Mammary epithelial cell (primary cell): ENCODE measurements at regions of chr1 and their contacts with region 1.

Region 1: GRCh38 chr1:40951943-40952743 is 27.4 kb upstream of the CTPS1 start:
- DNase-seq: peak; percentile 58
- H3K4me3 ChIP-seq: no peak overlapping the region
- H3K27ac ChIP-seq: no peak overlapping the region
- H3K4me1 ChIP-seq: peaks cover 13% of the 10 kb centered on the region
- H3K27me3 ChIP-seq: no peaks in the 10 kb centered on the region
- CTCF ChIP-seq: peak; percentile 92 to 97

Region 2: DNA sequence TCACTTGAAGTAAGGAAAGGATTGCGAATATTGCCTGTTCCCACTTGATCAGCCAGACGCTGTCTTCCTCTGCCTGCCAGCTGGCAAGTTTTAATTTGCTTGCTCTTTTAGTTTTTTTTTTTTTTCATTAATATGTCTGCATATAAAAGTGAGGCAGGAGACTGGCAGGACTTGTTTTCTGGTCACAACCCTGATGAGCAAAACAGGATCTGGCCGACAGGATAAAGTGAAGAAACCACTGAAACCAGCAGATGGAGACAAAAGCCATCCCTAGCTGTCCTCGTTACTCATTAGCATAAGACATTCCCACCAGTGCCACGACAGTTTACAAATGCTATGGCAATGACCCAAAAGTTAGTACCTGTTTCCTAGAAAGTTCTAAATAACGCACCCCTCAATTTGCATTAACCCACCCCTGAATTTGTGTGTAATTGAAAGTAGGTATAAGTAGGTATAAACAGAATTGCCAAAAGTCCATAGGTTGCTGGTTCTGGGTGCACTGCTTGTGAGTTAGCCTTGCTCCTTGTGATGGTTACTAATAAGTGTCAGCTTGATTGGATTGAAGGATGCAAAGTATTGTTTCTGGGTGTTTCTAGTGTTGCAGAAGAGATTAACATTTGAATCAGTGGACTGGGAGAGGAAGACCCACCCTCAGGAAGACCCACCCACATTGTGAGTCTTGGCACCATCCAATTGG is 359.9 kb before region 1 on chr1:
- CTCF ChIA-PET with region 1: no interaction called
- dilution Hi-C with region 1: no loop called
- in situ Hi-C with region 1: no loop called
- intact Hi-C with region 1: loop called (anchors 1 kb)
- DNase-seq: peak; percentile 75
- H3K4me3 ChIP-seq: no peak overlapping the region
- H3K27ac ChIP-seq: no peak overlapping the region
- H3K4me1 ChIP-seq: peaks cover 17% of the 10 kb centered on the region
- H3K27me3 ChIP-seq: no peaks in the 10 kb centered on the region
- CTCF ChIP-seq: peak; percentile 76

Region 3: DNA sequence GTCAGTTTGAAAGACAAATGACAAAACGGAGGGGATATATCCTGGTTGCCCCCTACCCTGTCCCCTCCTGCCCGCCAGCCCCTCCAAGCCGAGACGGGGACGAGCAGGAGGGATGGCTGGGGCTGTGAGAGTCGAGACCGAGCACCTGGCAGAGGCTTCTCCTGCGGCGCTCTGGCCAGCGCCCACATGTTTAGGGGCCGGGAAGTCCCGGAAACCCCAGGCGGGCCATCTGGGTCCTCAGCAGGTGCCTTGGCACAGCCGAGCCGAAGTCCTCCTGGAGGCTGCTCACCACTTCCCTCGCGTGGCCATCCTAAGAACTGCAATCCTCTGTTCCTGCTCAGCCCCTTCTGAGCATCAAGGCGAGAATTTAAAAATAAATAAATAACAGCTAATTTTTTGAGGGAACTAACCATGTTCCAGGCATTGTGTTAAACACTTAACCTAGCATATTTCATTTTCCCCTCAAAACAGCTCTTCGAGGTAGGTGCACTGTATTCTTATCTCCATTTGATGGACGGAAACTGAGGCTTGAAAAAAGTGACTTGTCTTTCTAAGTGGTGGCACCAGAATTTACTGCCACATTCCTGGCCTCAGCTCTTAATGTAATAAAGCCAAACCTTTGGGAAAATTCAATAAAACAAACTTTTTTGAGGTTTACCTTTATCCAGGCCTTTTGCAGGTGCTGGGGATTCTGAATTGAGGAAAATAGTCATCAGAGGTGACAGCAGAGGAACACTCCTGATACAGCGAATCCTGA is 283.2 kb before region 1 on chr1:
- CTCF ChIA-PET with region 1: no interaction called
- dilution Hi-C with region 1: no loop called
- in situ Hi-C with region 1: no loop called
- intact Hi-C with region 1: loop called (anchors 2 kb)
- DNase-seq: peak; percentile 57
- H3K4me3 ChIP-seq: no peak overlapping the region
- H3K27ac ChIP-seq: no peak overlapping the region
- H3K4me1 ChIP-seq: peaks cover 7% of the 10 kb centered on the region
- H3K27me3 ChIP-seq: no peaks in the 10 kb centered on the region
- CTCF ChIP-seq: peak; percentile 94 to 95

Region 4: DNA sequence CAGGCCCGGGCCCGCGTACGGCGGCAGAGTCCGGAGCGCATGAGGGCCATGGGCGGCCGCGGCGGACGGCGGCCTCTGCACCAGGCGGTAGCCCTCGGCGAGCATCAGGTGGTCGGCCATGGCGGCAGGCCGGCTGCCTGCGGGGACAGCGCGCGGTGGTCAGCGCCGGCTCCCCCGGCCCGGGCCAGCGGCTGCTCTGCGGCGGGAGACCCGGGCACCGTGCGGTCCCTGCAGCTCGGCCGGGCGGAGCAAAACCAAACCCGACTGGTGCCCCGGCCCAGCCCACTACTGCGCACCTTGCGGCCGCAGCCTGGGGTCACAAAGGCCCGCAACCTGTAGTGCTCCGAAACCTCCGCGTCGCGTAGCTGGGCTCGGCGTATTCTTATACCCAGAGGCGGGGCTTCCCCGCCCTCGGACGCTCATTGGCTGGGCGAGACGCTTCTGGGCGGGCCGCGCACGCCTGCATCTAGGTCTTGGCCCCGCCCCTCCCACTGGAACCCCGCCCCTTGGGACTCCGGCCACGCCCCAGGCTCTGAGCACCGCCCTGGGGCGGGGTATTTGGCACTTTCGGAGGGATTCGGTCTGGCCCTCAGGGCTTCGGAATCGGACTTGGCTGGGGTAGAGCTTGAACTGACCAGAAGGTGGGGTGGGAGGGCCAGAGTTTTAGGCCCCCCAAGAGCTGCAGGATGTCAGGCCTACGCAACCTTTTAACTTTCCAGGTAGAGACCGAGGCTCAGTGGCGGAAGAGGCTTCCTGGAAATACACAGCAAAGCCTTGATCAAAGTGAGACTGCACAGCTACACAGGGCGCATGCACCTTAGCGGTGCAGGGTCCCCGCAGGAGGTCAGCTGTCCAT is 89.9 kb before region 1 on chr1 and contains the start of gene CITED4:
- CTCF ChIA-PET with region 1: interaction called, 51 read pairs
- dilution Hi-C with region 1: no loop called
- in situ Hi-C with region 1: no loop called
- intact Hi-C with region 1: loop called (anchors 1 kb)
- DNase-seq: peak; percentile 95
- H3K4me3 ChIP-seq: peak within 1 kb of the TSS; percentile 59 to 82 (median 62)
- H3K27ac ChIP-seq: peak within 1 kb of the TSS; percentile 52
- H3K4me1 ChIP-seq: peaks cover 28% of the 10 kb centered on the region
- H3K27me3 ChIP-seq: no peaks in the 10 kb centered on the region
- CTCF ChIP-seq: peak; percentile 36 to 47
- total RNA-seq, gene CITED4: 54.8 to 140 TPM

Region 5: DNA sequence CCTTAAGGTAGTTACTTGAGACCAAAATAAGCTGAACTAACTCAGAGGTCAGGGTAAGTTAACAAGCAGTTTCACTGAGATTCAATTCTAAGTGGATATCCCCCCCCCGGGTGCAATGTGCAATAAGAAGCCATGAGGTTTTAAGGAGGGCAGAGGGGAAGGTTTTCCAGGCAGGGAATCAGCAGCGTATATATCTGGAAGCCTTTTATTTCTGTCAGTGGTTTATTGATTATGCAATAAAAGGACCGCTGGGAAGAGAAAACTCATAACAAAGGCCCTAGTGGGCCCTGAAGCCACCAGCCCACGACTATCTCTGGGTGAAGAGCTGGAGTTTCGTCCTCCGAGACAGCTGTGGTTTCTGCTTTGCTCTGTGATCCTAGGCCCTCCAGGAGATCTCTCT is 25.7 kb before region 1 on chr1:
- CTCF ChIA-PET with region 1: no interaction called
- dilution Hi-C with region 1: no loop called
- in situ Hi-C with region 1: no loop called
- intact Hi-C with region 1: no loop called
- DNase-seq: no peak
- H3K4me3 ChIP-seq: no peak overlapping the region
- H3K27ac ChIP-seq: no peak overlapping the region
- H3K4me1 ChIP-seq: no peaks in the 10 kb centered on the region
- H3K27me3 ChIP-seq: no peaks in the 10 kb centered on the region
- CTCF ChIP-seq: no peak

Region 6: DNA sequence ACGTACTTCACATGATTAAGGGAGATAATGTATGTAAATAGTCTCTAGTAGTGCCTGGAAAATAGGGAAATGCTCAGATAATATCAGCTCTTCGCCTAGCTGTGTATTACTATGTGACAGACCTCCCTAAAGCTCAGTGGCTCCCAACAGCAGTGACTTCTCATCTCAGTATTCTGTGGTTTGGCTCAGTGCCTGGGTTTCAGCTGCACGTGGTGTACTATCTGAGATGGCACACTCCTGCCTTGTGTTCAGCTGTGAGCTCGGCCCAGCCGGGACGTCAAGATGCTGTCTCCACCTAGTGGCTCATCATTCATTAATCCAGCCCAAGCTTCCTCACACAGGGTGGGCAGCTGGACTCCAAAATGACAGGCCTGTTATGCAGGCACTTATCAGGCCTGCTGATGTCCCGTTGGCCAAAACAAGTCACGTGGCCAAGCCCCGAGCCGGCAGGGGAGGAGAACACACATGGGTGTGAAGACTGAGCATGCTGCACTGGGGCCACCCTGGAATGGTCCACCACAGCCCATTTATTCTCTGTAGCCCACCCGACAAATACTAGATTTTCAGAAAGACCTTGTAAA is 51.6 kb after region 1 on chr1:
- CTCF ChIA-PET with region 1: interaction called, 5 read pairs
- dilution Hi-C with region 1: no loop called
- in situ Hi-C with region 1: no loop called
- intact Hi-C with region 1: loop called (anchors 1 kb)
- DNase-seq: peak; percentile 97
- H3K4me3 ChIP-seq: no peak overlapping the region
- H3K27ac ChIP-seq: peak overlapping the region; percentile 38
- H3K4me1 ChIP-seq: peaks cover 49% of the 10 kb centered on the region
- H3K27me3 ChIP-seq: no peaks in the 10 kb centered on the region
- CTCF ChIP-seq: peak; percentile 57 to 74